Tibial artery (tissue), 4 donors: ENCODE measurements at regions of chr1 and their contacts with region 1.

Region 1: DNA sequence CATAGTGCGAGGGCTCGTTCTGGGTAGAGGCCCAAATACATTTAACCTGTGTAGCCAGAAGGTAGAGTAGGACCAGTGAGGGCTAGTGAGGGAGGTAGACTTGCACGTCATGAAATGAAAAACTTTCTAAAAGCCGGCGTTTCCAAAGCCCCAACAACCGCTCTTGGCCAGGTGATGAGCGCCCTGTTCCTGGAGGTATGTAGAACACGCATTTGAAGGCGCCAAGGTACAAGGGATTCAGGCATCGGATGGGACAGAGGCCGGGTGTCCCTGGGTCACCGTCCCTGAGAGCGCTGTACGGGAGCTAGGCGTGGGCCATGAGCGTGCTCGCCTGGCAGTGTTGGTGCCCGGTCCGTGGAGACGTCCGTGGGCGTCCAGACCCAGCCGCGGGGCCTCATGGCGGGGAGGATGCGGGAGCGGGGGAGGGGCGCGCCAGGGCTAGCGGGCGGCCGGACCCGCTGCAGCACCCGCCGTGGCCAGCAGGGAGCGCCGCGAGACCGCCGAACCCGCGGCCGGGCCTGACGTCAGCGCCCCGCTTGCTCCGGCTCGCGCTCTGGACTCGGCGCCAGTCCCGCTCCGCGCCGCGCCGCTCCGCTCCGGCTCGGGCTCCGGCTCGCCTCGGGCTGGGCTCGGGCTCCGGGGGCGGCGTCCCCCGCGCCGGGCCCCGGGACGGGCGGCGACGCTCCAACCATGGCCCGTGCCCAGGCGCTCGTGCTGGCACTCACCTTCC is at the start of gene PTPRU:
- DNase-seq: peak; percentile 55 to 83
- H3K4me3 ChIP-seq: peak within 1 kb of the TSS; percentile 59 to 73
- H3K27ac ChIP-seq: peak within 1 kb of the TSS; percentile 60 to 73
- H3K4me1 ChIP-seq: peaks cover 0 to 26% (median 19%) of the 10 kb centered on the region in 4 donors
- H3K27me3 ChIP-seq: no peaks in the 10 kb centered on the region
- CTCF ChIP-seq: peak; percentile 75 to 99

Region 2: DNA sequence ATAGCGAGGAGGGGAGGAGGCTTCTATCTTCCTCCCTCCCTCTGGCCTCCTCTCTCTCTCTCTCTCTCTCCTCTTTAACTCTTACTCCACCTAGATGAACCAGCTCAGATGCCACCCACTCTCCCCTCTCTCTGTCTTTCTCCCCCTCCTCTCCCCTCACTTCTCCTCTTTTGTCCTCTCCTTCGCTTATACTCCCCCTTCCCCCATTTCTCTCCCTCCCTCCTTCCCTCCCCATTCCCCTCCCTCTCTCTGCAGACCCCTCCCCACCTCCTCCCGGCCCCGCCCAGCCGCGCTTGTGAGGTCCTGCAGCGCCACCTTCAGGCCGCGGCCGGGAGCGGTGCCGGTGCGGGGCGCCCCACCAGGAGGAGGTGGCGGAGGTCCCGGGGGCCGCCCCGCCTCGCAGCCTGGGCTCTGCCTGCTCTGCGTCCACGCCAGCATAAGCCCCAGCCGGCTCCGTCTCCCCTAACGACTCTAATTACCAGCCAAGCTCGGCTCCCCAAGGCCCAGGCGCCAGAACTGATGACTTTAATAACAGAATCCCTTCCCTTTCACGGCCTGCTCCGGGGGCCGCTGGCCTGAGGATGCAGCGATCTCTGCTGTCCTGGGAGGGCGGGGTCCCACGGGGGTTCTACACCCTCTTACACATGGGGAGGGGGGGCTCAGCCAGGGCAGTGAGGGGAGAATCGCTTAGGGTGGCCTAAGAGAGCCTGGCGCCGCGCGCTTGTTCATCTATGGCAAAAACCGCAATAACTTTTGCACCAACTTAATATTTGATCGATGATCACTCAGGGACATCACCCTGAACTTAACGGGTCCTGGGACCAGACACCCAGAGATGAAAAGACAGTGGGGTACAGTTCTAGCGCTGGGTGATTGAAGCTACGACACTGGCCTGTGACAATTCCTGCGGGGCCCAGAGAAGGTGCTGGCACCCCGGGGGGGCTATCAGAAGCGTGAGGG is 850.0 kb after region 1 on chr1:
- intact Hi-C with region 1: loop called (anchors 5 kb)
- DNase-seq: peak in 1 of 2 donors; percentile 47
- H3K4me3 ChIP-seq: peak overlapping the region; percentile 29 to 44
- H3K27ac ChIP-seq: peak overlapping the region; percentile 74 to 87
- H3K4me1 ChIP-seq: peaks cover 0 to 47% (median 42%) of the 10 kb centered on the region in 4 donors
- H3K27me3 ChIP-seq: peaks cover 0 to 18% of the 10 kb centered on the region in 2 donors
- CTCF ChIP-seq: peak; percentile 79 to 87

Region 3: DNA sequence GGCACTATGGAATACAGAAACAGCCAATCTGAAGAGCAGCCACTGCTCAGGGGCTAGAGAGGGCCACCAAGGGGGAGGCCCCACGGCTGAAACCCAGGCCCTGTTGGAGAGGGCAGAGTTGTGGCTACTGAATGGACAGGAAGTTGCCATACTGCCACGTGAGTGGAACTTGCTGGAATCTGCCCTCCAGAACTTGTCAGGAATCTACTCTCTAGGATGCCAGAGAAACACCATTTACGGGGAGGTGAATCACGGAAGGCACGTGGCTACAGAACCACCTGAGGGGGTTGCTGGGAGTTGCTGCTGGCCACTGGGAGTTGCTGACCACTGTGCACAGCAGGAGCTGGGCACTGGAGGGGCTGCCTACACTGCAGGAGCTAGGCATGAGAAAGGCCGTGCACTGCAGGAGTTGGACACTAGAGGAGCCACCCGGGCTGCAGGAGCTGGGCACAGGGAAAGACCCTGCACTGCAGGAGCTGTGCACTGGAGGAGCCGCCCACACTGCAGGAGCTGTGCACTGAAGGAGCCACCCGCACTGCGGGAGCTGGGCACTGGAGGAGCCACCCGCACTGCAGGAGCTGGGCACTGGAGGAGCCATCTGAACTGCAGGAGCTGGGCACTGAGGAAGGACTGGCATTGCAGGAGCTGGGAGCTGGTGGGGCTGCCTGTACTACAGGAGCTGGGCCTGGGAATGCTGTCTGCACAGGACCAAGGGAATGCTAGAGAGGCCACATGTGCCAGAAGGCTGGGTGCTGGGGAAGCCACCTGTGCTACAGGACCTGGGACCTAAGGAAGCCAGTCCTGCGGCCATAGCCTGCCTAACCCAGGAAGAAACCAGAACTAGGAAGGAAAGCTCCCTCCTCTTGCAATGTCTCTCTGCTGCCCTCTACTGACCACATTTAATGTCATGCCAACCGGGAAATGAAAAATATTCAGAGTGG is 1143.8 kb after region 1 on chr1:
- intact Hi-C with region 1: loop called (anchors 2 kb)
- DNase-seq: peak; percentile 46 to 63
- H3K4me3 ChIP-seq: no peak overlapping the region
- H3K27ac ChIP-seq: no peak overlapping the region
- H3K4me1 ChIP-seq: peaks cover 0 to 8% (median 2%) of the 10 kb centered on the region in 4 donors
- H3K27me3 ChIP-seq: peaks cover 0 to 54% of the 10 kb centered on the region in 2 donors
- CTCF ChIP-seq: peak; percentile 73 to 87